Naive thymus-derived CD4-positive, alpha-beta T cell (primary cell): ENCODE measurements at regions of chr2 and their contacts with region 1.

Region 1: DNA sequence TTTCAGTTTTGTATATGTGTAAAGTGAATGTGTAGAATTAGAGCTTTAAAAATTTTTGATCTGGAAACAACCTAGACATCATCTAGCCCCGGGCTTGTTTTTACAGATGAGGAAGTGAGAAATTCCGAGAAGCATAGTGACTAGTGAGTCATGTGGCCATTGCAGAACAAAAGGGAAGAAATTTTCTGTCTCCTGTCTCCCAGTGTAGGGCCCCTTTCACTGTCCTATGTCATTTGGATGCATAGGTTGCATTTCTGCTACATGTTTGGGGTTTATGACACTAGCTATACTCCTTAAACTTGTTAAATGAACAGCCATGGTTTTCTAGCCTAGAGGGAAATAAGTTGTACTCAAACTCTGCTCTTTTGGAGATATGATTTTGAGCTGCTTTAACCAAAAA is 84.6 kb downstream of the PLCL1 start:
- DNase-seq: peak in 8 of 9 donors; percentile 31 to 77 (median 60)
- ATAC-seq: peak; percentile 90
- H3K4me3 ChIP-seq: no peak overlapping the region
- H3K4me3 Mint-ChIP-seq: peak overlapping the region; percentile 26 to 88 (median 72)
- H3K27ac ChIP-seq: peak overlapping the region; percentile 72
- H3K27ac Mint-ChIP-seq: peak overlapping the region; percentile 63 to 97 (median 89)
- H3K4me1 ChIP-seq: peaks cover 0 to 49% of the 10 kb centered on the region in 2 donors
- H3K4me1 Mint-ChIP-seq: peaks cover 27 to 90% (median 71%) of the 10 kb centered on the region in 7 donors
- H3K27me3 ChIP-seq: no peaks in the 10 kb centered on the region
- H3K27me3 Mint-ChIP-seq: no peaks in the 10 kb centered on the region

Region 2: GRCh38 chr2:197851451-197851850 is 37.6 kb before region 1 on chr2:
- CTCF ChIA-PET with region 1: interaction called, 6 read pairs
- POLR2A ChIA-PET with region 1: interaction called, 9 read pairs
- intact Hi-C with region 1: loop called (anchors 1 to 5 kb)
- DNase-seq: no peak
- ATAC-seq: no peak
- H3K4me3 ChIP-seq: no peak overlapping the region
- H3K4me3 Mint-ChIP-seq: peak overlapping the region in 7 of 10 donors; percentile 3 to 80 (median 29)
- H3K27ac ChIP-seq: no peak overlapping the region
- H3K27ac Mint-ChIP-seq: peak overlapping the region in 8 of 9 donors; percentile 60 to 100 (median 98)
- H3K4me1 ChIP-seq: peaks cover 4 to 76% of the 10 kb centered on the region in 2 donors
- H3K4me1 Mint-ChIP-seq: peaks cover 29 to 100% (median 93%) of the 10 kb centered on the region in 7 donors
- H3K27me3 ChIP-seq: no peaks in the 10 kb centered on the region
- H3K27me3 Mint-ChIP-seq: no peaks in the 10 kb centered on the region

Region 3: DNA sequence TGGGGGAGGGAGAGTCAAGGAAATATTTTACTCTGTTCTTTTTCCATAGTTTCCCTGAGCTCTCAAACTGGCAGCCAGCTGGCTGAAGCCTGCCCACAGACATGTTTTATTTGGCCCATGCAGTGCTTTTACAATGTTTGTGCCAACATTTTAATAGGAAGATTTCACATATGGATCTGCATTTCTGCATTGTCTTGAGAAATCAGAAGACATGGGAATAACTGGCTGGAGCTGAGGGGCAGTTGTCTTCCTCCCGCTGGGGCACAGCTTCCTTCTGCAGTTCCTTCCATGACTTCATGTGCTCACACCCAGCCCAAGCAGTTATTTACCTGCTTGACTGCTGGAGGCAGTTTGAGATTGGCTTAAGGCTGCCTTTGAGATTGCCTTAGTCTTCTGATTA is 10.2 kb before region 1 on chr2:
- CTCF ChIA-PET with region 1: interaction called, 4 read pairs
- POLR2A ChIA-PET with region 1: interaction called, 5 read pairs
- intact Hi-C with region 1: loop called in 1 of 2 experiments (anchors 1 kb)
- DNase-seq: no peak
- ATAC-seq: no peak
- H3K4me3 ChIP-seq: no peak overlapping the region
- H3K4me3 Mint-ChIP-seq: peak overlapping the region in 2 of 10 donors; percentile 6 to 17
- H3K27ac ChIP-seq: no peak overlapping the region
- H3K27ac Mint-ChIP-seq: peak overlapping the region in 3 of 9 donors; percentile 28 to 68 (median 38)
- H3K4me1 ChIP-seq: peaks cover 0 to 3% of the 10 kb centered on the region in 2 donors
- H3K4me1 Mint-ChIP-seq: peaks cover 0 to 71% (median 69%) of the 10 kb centered on the region in 7 donors
- H3K27me3 ChIP-seq: no peaks in the 10 kb centered on the region
- H3K27me3 Mint-ChIP-seq: no peaks in the 10 kb centered on the region

Region 4: DNA sequence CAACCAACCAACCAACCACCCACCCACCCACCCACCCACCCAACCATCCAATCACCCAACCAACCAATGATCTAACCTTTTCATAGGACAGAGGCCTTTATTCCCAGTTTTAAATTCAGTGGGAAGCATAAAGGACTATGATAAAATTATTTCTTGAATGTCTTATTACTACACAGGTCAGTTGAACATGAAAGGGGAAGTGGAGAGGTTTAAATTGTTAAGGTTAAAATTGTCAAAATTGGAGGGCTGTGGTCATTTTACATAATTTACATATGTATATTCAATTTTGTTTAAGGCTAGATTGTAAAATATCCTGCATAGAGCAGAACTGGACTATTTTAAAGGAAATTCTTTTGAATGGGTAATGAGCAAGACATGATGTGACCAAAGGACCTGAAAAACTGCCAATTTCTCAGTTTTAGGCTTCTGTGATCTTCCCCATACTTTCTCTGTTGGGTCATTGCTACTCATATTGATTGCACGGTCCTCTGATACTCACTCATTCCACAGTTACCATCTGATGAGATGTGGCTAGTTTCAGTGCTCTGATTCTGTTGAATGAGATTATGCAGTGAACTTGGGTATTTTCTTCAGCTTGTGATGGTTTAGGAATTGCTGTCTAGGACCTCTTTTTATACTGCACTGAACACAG is 42.7 kb after region 1 on chr2:
- CTCF ChIA-PET with region 1: no interaction called
- POLR2A ChIA-PET with region 1: interaction called, 4 read pairs
- intact Hi-C with region 1: loop called in 1 of 2 experiments (anchors 5 kb)
- DNase-seq: no peak
- ATAC-seq: no peak
- H3K4me3 ChIP-seq: no peak overlapping the region
- H3K4me3 Mint-ChIP-seq: no peak overlapping the region
- H3K27ac ChIP-seq: no peak overlapping the region
- H3K27ac Mint-ChIP-seq: peak overlapping the region in 1 of 9 donors; percentile 49
- H3K4me1 ChIP-seq: peaks cover 0 to 16% of the 10 kb centered on the region in 2 donors
- H3K4me1 Mint-ChIP-seq: peaks cover 21 to 89% (median 76%) of the 10 kb centered on the region in 7 donors
- H3K27me3 ChIP-seq: no peaks in the 10 kb centered on the region
- H3K27me3 Mint-ChIP-seq: peaks cover 0 to 1% (median 0%) of the 10 kb centered on the region in 5 donors